ENCODE measurements at regions of chr11 and their contacts with region 1.

Region 1: DNA sequence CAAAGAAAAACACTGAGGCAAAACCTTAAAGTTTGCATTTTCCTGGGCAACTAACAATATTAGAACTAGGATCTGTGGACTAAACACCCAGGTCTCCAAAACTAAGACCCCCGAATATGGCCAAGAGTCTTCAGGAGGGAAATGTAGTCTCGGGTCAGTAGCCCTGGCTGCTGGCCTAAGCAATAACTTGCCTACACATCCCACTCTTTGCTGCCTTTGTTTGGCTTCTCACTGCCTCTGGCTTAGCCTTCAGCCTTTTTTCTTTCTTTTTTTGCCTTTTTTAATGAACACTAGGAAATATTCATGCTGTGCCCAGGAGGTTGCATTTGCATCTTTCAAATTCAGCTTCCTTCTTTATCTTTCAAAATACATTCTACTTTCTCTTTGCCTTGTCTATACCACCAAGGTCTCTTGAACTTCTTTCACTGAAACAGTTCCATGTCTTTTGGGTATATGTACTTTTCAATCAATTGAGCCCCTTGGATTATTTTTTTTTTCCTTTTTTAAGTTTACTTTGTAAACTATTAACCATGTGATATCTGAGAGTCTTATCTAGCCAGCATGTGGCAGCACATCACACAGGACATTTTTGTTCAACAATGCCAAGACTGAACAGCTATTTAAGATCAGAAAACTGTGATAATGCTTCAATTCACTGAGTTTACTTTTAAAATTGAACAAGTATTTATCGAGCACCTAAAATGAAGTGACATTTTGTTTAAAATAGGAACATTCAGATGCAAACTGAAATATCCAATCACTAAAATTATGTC is 165.0 kb upstream of the TRPC6 start:
- DNase-seq: no peak

Region 2: DNA sequence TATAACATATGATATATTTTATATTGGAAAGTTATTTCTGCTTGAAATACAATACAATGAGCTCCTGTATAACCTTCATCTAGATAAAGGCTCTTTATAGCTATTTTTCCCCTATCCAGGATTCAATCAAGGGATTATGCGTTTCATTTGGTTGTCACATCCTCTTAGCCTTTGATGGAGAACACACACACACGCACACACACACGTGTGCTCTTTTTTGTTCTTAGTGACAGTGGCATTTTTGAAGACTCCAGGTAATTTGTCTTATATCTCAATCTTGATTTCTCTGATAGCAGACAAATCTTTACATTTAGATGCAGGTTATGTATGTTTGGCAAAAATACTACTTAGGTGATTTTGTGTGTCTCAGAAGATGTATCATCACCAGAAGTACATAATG is 21.9 kb after region 1 on chr11:
- intact Hi-C with region 1: loop called in 1 of 2 experiments (anchors 1 kb)
- DNase-seq: no peak

Region 3: DNA sequence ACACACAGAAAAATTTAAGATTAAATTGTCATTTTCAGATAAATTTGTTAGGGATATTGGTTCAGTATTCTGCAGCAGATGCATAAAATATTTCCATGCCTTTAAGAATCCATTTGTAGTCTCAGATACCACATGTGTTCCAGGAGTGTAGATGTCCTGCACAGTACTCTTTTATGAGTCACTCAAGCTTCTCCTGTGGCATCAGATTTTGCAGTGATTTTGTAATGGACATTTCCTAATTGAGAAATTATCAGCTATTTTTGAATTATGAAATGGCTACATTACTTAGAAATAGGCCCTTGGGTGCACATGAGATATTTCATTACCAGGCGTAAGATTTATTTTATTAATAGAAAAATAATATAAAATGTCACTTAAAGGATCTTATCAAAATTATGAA is 1075.8 kb after region 1 on chr11:
- intact Hi-C with region 1: no loop called
- DNase-seq: no peak

Measured in posterior vena cava (tissue), 2 donors.